GM10248 (cell line): ENCODE measurements at regions of chr6 and their contacts with region 1.

Region 1: GRCh38 chr6:41602864-41603608 is 35.2 kb upstream of the MDFI start:
- DNase-seq: peak; percentile 87
- CTCF ChIP-seq: peak; percentile 97

Region 2: DNA sequence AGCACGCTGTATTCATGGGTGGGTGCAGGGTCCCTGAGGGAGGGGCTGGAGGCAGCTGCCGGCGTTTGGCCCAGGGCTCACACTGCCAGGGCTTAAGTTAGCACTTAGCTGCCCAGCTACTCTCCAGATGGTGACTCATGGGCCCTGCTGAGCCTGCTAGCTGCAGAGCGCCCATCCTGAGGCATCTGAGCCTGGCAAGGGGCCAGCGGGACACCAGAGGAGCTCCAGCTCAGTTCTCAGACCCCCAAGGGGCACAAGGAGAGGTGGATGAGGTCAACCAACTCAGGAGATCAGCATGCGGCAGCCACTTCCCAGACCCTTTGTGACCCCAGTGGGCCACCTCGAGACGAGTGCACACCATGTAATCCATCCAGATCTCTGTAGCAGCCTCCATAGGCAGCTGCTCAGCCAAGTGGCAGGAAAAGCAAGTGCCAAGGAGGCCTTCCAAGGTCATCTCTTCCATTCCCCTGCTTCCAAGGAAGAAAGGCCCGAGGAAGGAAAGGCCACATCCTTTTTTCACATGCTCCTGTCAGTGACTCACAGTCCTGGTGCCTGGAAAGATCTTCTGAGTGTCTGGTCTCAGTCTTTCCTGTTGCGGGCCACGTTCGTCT is 21.6 kb before region 1 on chr6:
- CTCF ChIA-PET with region 1: interaction called, 12 read pairs
- POLR2A ChIA-PET with region 1: no interaction called
- DNase-seq: no peak
- CTCF ChIP-seq: no peak

Region 3: GRCh38 chr6:41615254-41615653 is 12.2 kb after region 1 on chr6:
- CTCF ChIA-PET with region 1: interaction called, 11 read pairs
- POLR2A ChIA-PET with region 1: no interaction called
- DNase-seq: no peak
- CTCF ChIP-seq: no peak

Region 4: GRCh38 chr6:41683510-41684310 is 80.7 kb after region 1 on chr6:
- CTCF ChIA-PET with region 1: interaction called, 41 read pairs
- POLR2A ChIA-PET with region 1: interaction called, 3 read pairs
- DNase-seq: peak; percentile 89
- CTCF ChIP-seq: peak; percentile 89

Region 5: DNA sequence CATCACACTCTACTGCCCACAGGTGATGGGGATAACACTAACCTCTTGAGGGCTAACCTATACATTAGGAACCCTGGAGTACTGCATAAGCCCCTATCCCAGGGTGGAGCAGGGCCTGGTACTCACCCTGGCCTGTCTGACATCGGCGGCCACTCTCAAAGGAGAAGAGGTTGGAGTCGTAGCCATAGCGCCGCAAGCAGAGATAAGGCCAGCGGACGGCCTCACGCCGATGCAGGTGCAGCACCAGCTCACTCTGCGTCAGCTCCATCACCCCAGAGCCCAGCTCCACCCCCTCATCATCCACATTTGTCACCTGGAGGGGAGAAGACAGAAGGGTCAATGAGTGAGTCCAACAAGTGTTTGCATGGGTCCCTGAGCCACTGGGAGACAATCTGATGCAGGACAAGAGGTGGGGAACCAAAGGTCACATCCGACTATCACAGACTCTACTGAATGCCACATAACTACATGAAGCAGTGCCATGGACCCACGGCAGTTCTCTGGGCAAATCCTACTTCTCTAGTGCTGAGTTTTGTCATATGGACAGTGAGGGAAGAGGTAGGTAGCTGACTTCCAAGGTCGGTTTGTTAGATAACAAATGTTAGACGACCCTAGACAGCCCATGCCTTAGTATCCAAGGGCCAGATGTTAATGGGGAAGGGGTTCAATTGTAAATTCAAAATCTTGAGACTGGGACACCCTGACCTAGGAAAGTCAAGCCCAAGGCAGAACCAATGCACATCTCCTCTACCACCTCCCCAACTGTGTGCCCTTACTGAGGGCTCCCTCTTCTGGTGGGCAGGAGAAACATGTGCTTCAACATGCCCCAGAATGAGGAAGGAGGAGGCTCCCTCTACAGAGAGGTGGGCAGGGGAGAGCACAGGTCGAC is 172.5 kb after region 1 on chr6:
- CTCF ChIA-PET with region 1: interaction called, 13 read pairs
- POLR2A ChIA-PET with region 1: no interaction called
- DNase-seq: peak; percentile 81
- CTCF ChIP-seq: peak; percentile 93